OCI-LY7 (cell line): ENCODE measurements at regions of chr2 and their contacts with region 1.

Region 1: DNA sequence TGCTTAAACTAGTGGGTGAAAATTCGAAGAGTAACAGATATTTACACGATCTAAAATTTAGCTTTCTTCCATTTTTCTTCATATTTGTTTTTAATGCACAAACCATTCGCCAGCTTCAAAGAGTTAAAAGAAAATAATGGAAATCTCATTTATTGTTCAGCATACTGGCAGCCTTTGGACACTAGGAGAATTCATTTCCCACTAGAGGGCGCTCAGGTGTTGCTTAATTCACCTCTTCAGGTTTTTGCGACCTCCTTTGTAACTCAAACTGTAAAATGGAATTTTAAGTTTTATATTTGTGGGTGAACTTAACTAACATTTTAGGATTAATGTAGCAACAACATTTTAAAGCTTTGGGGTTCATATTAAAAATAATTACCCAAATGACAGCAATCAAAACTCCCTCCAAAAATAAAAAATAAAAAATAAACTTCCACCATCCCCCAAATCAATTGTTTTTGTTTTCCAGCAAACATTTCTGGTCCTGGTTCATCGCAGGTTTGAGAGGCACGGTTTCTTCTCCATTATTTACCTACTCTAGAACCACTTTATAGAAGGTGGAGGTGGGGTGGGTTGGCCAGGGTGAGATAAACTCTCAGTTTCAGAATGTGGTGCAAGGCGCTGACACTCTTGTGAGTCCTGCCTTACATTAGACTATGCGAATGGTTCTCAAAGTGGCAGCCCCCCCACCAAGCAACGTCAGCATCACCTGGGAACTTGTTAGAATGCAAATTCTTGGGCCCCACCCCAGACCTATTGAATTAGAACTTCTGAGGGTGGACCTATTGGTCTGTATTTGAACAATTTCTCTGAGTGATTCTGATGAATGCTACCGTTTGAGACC is 24.7 kb upstream of the PNPT1 start:
- DNase-seq: peak; percentile 76
- H3K4me3 ChIP-seq: no peak overlapping the region
- H3K27ac ChIP-seq: no peak overlapping the region
- H3K4me1 ChIP-seq: no peaks in the 10 kb centered on the region
- CTCF ChIP-seq: peak; percentile 99

Region 2: GRCh38 chr2:55951533-55951932 is 233.1 kb after region 1 on chr2:
- CTCF ChIA-PET with region 1: no interaction called
- POLR2A ChIA-PET with region 1: no interaction called
- intact Hi-C with region 1: loop called (anchors 1 kb)
- DNase-seq: no peak
- H3K4me3 ChIP-seq: no peak overlapping the region
- H3K27ac ChIP-seq: no peak overlapping the region
- H3K4me1 ChIP-seq: no peaks in the 10 kb centered on the region
- CTCF ChIP-seq: no peak

Region 3: DNA sequence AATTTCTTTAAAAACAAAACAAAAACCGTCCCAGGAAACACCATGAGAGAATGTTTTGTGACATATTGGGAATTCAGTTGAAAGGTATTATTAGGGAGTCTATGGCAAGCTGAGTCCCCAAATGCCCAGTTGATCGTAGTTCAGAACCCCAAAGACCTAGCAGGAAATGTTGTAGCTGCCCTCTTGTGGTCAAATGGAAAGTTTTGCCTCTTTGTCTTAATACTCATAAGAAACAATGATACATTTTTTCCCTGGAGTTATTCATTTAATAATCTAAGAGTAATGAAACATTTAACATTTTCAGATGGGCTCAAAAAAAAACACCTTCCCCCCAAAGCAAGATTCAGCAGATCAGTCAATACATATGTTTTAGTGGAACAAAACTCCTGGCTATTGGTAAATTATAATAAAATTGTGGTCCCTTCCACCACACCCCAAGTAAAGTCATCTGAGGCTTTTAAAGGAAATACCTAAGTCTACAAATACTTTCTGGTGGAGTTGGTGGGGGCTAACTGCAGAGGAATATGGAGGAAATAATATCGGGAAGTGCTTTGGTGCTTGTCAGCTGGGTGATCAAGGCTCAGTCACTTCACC is 243.0 kb after region 1 on chr2:
- CTCF ChIA-PET with region 1: no interaction called
- POLR2A ChIA-PET with region 1: no interaction called
- intact Hi-C with region 1: loop called (anchors 2 kb)
- DNase-seq: peak; percentile 39
- H3K4me3 ChIP-seq: no peak overlapping the region
- H3K27ac ChIP-seq: no peak overlapping the region
- H3K4me1 ChIP-seq: no peaks in the 10 kb centered on the region
- CTCF ChIP-seq: peak; percentile 86

Region 4: GRCh38 chr2:56009758-56010458 is 291.5 kb after region 1 on chr2:
- CTCF ChIA-PET with region 1: no interaction called
- POLR2A ChIA-PET with region 1: no interaction called
- intact Hi-C with region 1: loop called (anchors 2 kb)
- DNase-seq: peak; percentile 35
- H3K4me3 ChIP-seq: no peak overlapping the region
- H3K27ac ChIP-seq: no peak overlapping the region
- H3K4me1 ChIP-seq: peaks cover 8% of the 10 kb centered on the region
- CTCF ChIP-seq: peak; percentile 77

Region 5: GRCh38 chr2:56132138-56132537 is 413.8 kb after region 1 on chr2:
- CTCF ChIA-PET with region 1: no interaction called
- POLR2A ChIA-PET with region 1: interaction called, 4 read pairs
- intact Hi-C with region 1: loop called (anchors 5 kb)
- DNase-seq: peak; percentile 48
- H3K4me3 ChIP-seq: no peak overlapping the region
- H3K27ac ChIP-seq: no peak overlapping the region
- H3K4me1 ChIP-seq: no peaks in the 10 kb centered on the region
- CTCF ChIP-seq: peak; percentile 81